CD8-positive, alpha-beta T cell (primary cell): ENCODE measurements at regions of chr7 and their contacts with region 1.

Region 1: DNA sequence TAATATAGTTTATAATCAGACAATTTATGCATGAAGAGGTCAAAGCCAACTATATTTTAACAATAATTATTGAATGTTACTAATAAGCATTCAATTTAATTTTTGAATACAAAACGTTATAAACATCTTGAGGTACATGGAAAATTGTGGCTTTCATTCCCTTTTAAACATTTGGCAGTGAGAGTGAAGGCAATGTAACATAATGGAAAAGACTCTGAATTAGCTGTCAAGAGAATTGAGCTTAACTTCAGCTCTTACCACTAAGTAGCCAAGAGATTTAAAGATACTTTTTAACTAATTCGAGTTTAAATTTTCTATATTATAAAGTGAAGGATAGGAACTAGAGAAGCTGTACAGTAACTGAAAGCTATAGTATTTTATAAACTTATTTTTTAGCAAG is 98.6 kb downstream of the SEMA3A start:
- DNase-seq: no peak
- ATAC-seq: no peak
- H3K4me3 ChIP-seq: no peak overlapping the region
- H3K4me3 Mint-ChIP-seq: no peak overlapping the region
- H3K27ac ChIP-seq: no peak overlapping the region
- H3K27ac Mint-ChIP-seq: no peak overlapping the region
- H3K4me1 ChIP-seq: peaks cover 31% of the 10 kb centered on the region
- H3K4me1 Mint-ChIP-seq: peaks cover 38% of the 10 kb centered on the region
- H3K27me3 ChIP-seq: no peaks in the 10 kb centered on the region
- H3K27me3 Mint-ChIP-seq: no peaks in the 10 kb centered on the region
- CTCF ChIP-seq: no peak

Region 2: GRCh38 chr7:83996879-83997278 is 99.1 kb before region 1 on chr7:
- CTCF ChIA-PET with region 1: no interaction called
- POLR2A ChIA-PET with region 1: no interaction called
- intact Hi-C with region 1: no loop called
- DNase-seq: no peak
- ATAC-seq: no peak
- H3K4me3 ChIP-seq: no peak overlapping the region
- H3K4me3 Mint-ChIP-seq: no peak overlapping the region
- H3K27ac ChIP-seq: no peak overlapping the region
- H3K27ac Mint-ChIP-seq: no peak overlapping the region
- H3K4me1 ChIP-seq: no peaks in the 10 kb centered on the region
- H3K4me1 Mint-ChIP-seq: peaks cover 3% of the 10 kb centered on the region
- H3K27me3 ChIP-seq: no peaks in the 10 kb centered on the region
- H3K27me3 Mint-ChIP-seq: no peaks in the 10 kb centered on the region
- CTCF ChIP-seq: no peak

Region 3: GRCh38 chr7:84085147-84085546 is 10.8 kb before region 1 on chr7:
- CTCF ChIA-PET with region 1: no interaction called
- POLR2A ChIA-PET with region 1: no interaction called
- intact Hi-C with region 1: no loop called
- DNase-seq: no peak
- ATAC-seq: no peak
- H3K4me3 ChIP-seq: no peak overlapping the region
- H3K4me3 Mint-ChIP-seq: no peak overlapping the region
- H3K27ac ChIP-seq: no peak overlapping the region
- H3K27ac Mint-ChIP-seq: no peak overlapping the region
- H3K4me1 ChIP-seq: peaks cover 12% of the 10 kb centered on the region
- H3K4me1 Mint-ChIP-seq: peaks cover 17% of the 10 kb centered on the region
- H3K27me3 ChIP-seq: no peaks in the 10 kb centered on the region
- H3K27me3 Mint-ChIP-seq: no peaks in the 10 kb centered on the region
- CTCF ChIP-seq: no peak

Region 4: GRCh38 chr7:84139986-84140729 is 44.2 kb after region 1 on chr7:
- CTCF ChIA-PET with region 1: no interaction called
- POLR2A ChIA-PET with region 1: no interaction called
- intact Hi-C with region 1: loop called in 1 of 2 experiments (anchors 5 kb)
- DNase-seq: no peak
- ATAC-seq: no peak
- H3K4me3 ChIP-seq: no peak overlapping the region
- H3K4me3 Mint-ChIP-seq: no peak overlapping the region
- H3K27ac ChIP-seq: no peak overlapping the region
- H3K27ac Mint-ChIP-seq: no peak overlapping the region
- H3K4me1 ChIP-seq: no peaks in the 10 kb centered on the region
- H3K4me1 Mint-ChIP-seq: no peaks in the 10 kb centered on the region
- H3K27me3 ChIP-seq: no peaks in the 10 kb centered on the region
- H3K27me3 Mint-ChIP-seq: no peaks in the 10 kb centered on the region
- CTCF ChIP-seq: no peak